ENCODE measurements at regions of chr17 and their contacts with region 1.

Region 1: GRCh38 chr17:82627405-82627804 is 20.8 kb downstream of the WDR45B start:
- DNase-seq: no peak
- H3K4me3 ChIP-seq: no peak overlapping the region
- H3K27ac ChIP-seq: no peak overlapping the region
- H3K4me1 ChIP-seq: no peaks in the 10 kb centered on the region
- H3K27me3 ChIP-seq: no peaks in the 10 kb centered on the region
- CTCF ChIP-seq: no peak
- EP300 ChIP-seq: no peak
- POLR2A ChIP-seq: no peak
- RAD21 ChIP-seq: no peak

Region 2: DNA sequence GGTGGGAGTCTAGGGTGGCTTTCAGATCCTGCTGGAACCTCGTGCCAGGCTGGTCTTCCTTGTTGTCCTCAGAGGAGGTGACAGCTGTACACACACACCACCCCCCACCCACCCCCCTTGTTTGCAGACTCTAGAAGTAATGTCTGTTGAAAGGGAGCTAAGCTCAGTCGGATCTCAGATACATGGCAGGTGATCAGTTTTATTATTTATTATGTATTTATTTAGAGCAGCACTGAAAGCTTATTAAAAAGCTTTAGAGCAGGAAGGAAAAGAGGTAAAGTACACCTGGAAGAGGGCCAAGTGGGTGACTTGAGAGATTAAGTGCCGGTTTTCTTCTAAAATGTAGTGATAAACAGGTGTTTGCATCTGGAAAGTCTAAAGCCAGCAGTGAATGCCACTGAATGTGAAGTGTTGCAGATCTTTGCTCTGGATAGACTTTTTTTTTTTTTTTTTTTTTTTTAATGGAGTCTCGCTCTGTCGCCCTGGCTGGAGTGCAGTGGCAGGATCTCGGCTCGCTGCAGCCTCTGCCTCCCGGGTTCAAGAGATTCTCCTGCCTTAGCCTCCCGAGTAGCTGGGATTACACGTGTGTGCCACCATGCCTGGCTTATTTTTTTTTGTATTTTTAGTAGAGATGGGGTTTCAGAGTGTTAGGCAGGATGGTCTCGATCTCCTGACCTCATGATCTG is 67.7 kb before region 1 on chr17:
- CTCF ChIA-PET with region 1: no interaction called
- POLR2A ChIA-PET with region 1: no interaction called
- DNase-seq: no peak
- H3K4me3 ChIP-seq: no peak overlapping the region
- H3K27ac ChIP-seq: no peak overlapping the region; the same call in 1 of the 2 replicates
- H3K4me1 ChIP-seq: peaks cover 0 to 11% (median 2%) of the 10 kb centered on the region in 4 experiments; a peak in 2 of 7 replicates
- H3K27me3 ChIP-seq: no peaks in the 10 kb centered on the region
- CTCF ChIP-seq: no peak
- EP300 ChIP-seq: no peak
- POLR2A ChIP-seq: no peak
- RAD21 ChIP-seq: no peak

Region 3: GRCh38 chr17:82613355-82614235 is 13.8 kb before region 1 on chr17:
- CTCF ChIA-PET with region 1: interaction called, 18 read pairs
- POLR2A ChIA-PET with region 1: interaction called, 3 read pairs
- DNase-seq: no peak
- H3K4me3 ChIP-seq: no peak overlapping the region
- H3K27ac ChIP-seq: no peak overlapping the region
- H3K4me1 ChIP-seq: 0 out of 7 replicates have a peak, but pooled peaks cover 0 to 1% (median 0%) of the 10 kb centered on the region in 4 experiments
- H3K27me3 ChIP-seq: no peaks in the 10 kb centered on the region
- CTCF ChIP-seq: peak in 2 of 3 experiments; percentile 13 to 20; a peak in 2 of 4 replicates
- EP300 ChIP-seq: no peak
- POLR2A ChIP-seq: no peak
- RAD21 ChIP-seq: peak in 1 of 2 experiments; percentile 13; a peak in 1 of 4 replicates